ENCODE measurements at regions of chr1 and their contacts with region 1.

Region 1: GRCh38 chr1:211698161-211699026 is 23.0 kb upstream of the NEK2 start:
- DNase-seq: peak; percentile 81
- ATAC-seq: peak; percentile 95 to 99
- H3K4me3 ChIP-seq: no peak overlapping the region
- H3K27ac ChIP-seq: peak overlapping the region; percentile 66 to 80
- H3K4me1 ChIP-seq: peaks cover 8% of the 10 kb centered on the region; the same call in 2 of the 3 replicates
- CTCF ChIP-seq: peak; percentile 97
- EP300 ChIP-seq: no peak
- POLR2A ChIP-seq: no peak
- RAD21 ChIP-seq: peak; percentile 99

Region 2: DNA sequence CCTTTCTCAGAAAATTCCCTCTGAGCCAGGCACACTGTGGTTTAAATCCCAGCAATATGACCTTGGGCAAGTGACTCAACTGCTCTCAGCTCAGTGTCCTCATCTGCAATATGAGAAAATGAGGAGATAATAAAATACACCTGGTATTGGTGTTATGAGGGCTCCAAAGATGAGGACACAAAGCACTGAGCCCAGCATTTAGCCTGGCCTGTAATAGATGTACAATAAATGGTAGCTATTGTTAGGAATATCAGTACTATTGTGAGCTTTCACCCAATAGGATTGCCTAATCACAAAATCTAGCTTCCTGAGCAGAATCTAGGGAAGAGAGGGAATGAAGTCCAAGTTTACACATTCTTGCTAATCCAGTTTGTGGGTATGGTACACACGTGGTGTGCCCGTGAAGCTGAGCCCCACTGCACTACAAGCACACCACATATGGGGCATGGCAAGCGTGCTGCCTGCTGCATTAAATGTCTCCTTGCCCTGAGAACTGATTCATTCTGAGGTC is 95.1 kb before region 1 on chr1:
- CTCF ChIA-PET with region 1: no interaction called
- POLR2A ChIA-PET with region 1: no interaction called
- DNase-seq: no peak
- ATAC-seq: no peak
- H3K4me3 ChIP-seq: no peak overlapping the region
- H3K27ac ChIP-seq: no peak overlapping the region
- H3K4me1 ChIP-seq: peaks cover 18% of the 10 kb centered on the region
- CTCF ChIP-seq: no peak
- EP300 ChIP-seq: no peak
- POLR2A ChIP-seq: no peak
- RAD21 ChIP-seq: no peak

Region 3: DNA sequence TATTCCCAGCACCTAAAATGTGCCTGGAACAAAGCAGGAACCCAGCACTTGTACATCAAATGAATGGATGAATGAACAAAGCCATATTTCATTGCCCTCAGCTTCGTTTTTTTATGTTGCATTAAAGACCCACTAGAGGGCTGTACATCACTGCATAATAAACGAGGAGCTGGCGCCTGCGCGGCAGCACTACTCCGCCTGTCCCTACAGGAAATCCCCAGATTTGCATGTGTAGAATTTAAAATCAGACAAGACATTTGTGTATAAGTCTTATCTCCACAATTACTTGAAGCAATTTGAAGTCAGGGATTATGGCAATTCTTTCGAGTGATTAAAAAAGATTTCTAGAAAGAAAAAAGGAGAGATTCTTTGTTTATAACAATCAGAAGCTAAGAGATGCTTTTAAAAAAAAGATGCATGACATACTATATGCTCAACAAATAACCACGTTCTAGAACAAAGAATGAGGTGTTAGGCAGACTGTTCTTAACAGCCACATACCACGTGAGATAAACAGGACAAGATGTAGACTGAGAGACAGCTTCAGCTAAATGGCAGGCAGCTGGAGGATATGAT is 17.6 kb before region 1 on chr1:
- CTCF ChIA-PET with region 1: interaction called, 100 read pairs
- POLR2A ChIA-PET with region 1: no interaction called
- DNase-seq: peak; percentile 89 to 91
- ATAC-seq: peak; percentile 84 to 88
- H3K4me3 ChIP-seq: no peak overlapping the region
- H3K27ac ChIP-seq: peak overlapping the region; percentile 50 to 71; a peak in 5 of 6 replicates
- H3K4me1 ChIP-seq: peaks cover 9% of the 10 kb centered on the region
- CTCF ChIP-seq: peak; percentile 95
- EP300 ChIP-seq: no peak
- POLR2A ChIP-seq: no peak
- RAD21 ChIP-seq: peak; percentile 96 to 97

Region 4: DNA sequence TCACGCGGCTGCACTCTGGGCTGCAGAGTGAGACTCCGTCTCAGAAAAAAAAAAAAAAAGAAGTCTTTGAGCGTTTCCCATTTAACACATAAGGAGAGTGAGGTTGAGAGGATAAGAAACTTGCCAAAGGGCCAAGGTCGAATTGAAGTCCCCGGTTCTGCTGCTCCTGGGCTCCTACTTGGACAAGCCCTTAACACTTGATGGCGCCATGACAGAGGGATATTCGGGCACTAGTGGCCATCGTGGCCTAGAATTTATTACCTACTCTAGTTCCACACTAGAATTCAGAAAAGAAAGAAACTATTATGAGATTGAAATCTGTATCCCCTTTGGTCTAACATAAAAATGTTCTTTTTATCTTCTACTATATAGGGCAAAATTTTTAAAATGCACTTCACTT is 42.7 kb after region 1 on chr1:
- CTCF ChIA-PET with region 1: interaction called, 35 read pairs
- POLR2A ChIA-PET with region 1: no interaction called
- DNase-seq: peak in 1 of 2 experiments; percentile 35
- ATAC-seq: no peak
- H3K4me3 ChIP-seq: no peak overlapping the region
- H3K27ac ChIP-seq: peak overlapping the region in 1 of 2 experiments; percentile 12; a peak in 1 of 6 replicates
- H3K4me1 ChIP-seq: peaks cover 40% of the 10 kb centered on the region
- CTCF ChIP-seq: no peak; the same call in 2 of the 3 replicates
- EP300 ChIP-seq: no peak
- POLR2A ChIP-seq: no peak
- RAD21 ChIP-seq: peak in 1 of 2 experiments; percentile 39; a peak in 2 of 5 replicates

Region 5: GRCh38 chr1:211788626-211789025 is 90.2 kb after region 1 on chr1:
- CTCF ChIA-PET with region 1: interaction called, 10 read pairs
- POLR2A ChIA-PET with region 1: no interaction called
- DNase-seq: no peak
- ATAC-seq: no peak
- H3K4me3 ChIP-seq: no peak overlapping the region
- H3K27ac ChIP-seq: no peak overlapping the region
- H3K4me1 ChIP-seq: peaks cover 8% of the 10 kb centered on the region; the same call in 2 of the 3 replicates
- CTCF ChIP-seq: no peak
- EP300 ChIP-seq: no peak
- POLR2A ChIP-seq: no peak
- RAD21 ChIP-seq: no peak

Region 6: GRCh38 chr1:211830330-211831142 is 132.1 kb after region 1 on chr1 and contains the start of gene LPGAT1:
- CTCF ChIA-PET with region 1: interaction called, 38 read pairs
- POLR2A ChIA-PET with region 1: no interaction called
- DNase-seq: peak; percentile 76 to 77
- ATAC-seq: peak; percentile 89 to 95
- H3K4me3 ChIP-seq: peak within 1 kb of the TSS; percentile 69
- H3K27ac ChIP-seq: peak within 1 kb of the TSS; percentile 97 to 99
- H3K4me1 ChIP-seq: peaks cover 42% of the 10 kb centered on the region
- CTCF ChIP-seq: peak; percentile 83
- EP300 ChIP-seq: no peak
- POLR2A ChIP-seq: no peak; the same call in 1 of the 2 replicates
- RAD21 ChIP-seq: peak; percentile 46 to 88; a peak in 4 of 5 replicates
- polyA plus RNA-seq, gene LPGAT1: 48.0 and 48.5 TPM in 2 replicates

Region 7: DNA sequence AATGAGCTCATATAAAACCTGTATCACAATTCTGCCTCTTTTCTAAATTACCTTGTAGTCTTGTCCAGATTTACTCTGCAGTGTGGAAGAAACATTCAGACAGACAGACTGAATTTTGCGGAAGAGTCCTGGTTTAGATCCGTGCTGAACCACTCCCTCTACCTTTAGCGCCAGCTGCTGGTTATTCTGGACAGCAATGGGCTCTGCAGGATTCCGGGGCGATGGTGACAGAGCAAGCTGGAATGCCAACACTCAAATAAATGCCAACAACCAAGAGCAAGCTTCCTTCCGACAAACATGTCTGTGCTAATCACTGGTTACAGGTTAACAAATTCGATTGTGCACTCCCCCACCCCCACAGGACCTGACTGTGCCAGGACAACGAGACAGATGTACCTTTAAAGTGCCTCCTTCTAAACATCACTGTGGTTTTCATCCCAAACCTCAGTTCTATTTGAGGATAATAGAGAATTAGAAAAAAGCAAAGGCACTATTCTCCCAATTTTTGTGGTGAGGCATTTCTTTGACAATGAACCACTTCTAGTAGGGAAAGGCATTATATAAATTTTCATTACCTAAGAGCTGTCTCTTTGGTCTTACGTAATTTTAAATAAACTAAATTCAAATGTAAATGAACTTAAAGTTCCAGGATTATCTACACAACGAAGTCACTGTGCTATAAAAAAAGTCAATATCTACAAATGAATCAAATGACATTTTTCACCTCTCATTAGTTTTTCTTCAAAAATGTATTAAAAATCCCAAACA is 246.5 kb after region 1 on chr1:
- CTCF ChIA-PET with region 1: interaction called, 61 read pairs
- POLR2A ChIA-PET with region 1: interaction called, 3 read pairs
- DNase-seq: peak; percentile 93 to 96
- ATAC-seq: peak; percentile 99 to 100
- H3K4me3 ChIP-seq: 0 out of 3 replicates have a peak overlapping the region, but pooled peaks have one; percentile 2
- H3K27ac ChIP-seq: peak overlapping the region; percentile 79 to 84
- H3K4me1 ChIP-seq: peaks cover 30% of the 10 kb centered on the region
- CTCF ChIP-seq: peak; percentile 95
- EP300 ChIP-seq: peak; percentile 10 to 52; a peak in 2 of 5 replicates
- POLR2A ChIP-seq: no peak
- RAD21 ChIP-seq: peak; percentile 95 to 97

Measured in A549 (cell line).